ENCODE measurements at regions of chr1 and their contacts with region 1.

Region 1: GRCh38 chr1:84442256-84442655 is 36.8 kb upstream of the RPF1 start:
- DNase-seq: peak; percentile 80
- ATAC-seq: peak; percentile 94
- H3K4me3 ChIP-seq: no peak overlapping the region
- H3K4me3 Mint-ChIP-seq: no peak overlapping the region
- H3K27ac ChIP-seq: no peak overlapping the region
- H3K27ac Mint-ChIP-seq: no peak overlapping the region
- H3K4me1 ChIP-seq: peaks cover 18 to 23% of the 10 kb centered on the region in 2 donors
- H3K4me1 Mint-ChIP-seq: peaks cover 18% of the 10 kb centered on the region
- H3K27me3 ChIP-seq: peaks cover 0 to 4% (median 0%) of the 10 kb centered on the region in 4 experiments
- H3K27me3 Mint-ChIP-seq: peaks cover 8% of the 10 kb centered on the region
- CTCF ChIP-seq: peak; percentile 73

Region 2: DNA sequence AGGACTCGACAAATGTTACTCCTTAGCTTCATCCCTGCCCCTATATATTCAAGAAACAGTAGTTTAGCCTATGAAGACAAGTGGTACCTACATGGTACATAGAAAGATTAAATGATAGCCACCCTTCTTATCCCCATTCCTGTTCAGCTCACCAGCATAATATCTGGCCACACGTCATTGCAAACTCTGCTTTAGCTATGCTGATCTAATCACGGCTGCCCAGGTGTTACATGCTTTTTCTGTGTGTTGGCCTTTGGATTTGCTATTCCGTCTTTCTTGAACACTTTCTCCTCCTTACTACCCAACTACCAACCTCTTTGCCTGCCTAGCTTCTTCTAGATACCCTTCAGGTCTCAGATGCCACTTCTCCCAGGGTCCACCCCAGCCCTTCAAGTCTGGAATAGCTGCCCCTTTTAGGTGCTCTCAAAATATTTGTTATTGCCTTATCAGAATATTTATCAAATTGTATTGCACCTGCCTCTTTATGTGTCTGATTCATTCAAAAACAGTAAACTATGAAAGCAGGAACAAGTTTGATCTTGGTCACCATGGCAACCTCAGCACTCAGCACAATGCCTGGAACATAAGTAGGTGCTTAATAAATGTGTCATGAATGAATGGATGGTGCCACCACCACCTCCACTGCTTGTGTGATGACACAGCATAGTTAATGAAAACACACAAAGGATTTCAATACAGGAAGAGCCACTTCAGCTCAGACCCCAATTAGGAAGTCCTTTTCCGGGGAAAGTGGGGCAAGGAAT is 55.4 kb before region 1 on chr1:
- CTCF ChIA-PET with region 1: no interaction called
- POLR2A ChIA-PET with region 1: no interaction called
- intact Hi-C with region 1: no loop called
- DNase-seq: no peak
- ATAC-seq: no peak
- H3K4me3 ChIP-seq: no peak overlapping the region
- H3K4me3 Mint-ChIP-seq: no peak overlapping the region
- H3K27ac ChIP-seq: no peak overlapping the region
- H3K27ac Mint-ChIP-seq: no peak overlapping the region
- H3K4me1 ChIP-seq: no peaks in the 10 kb centered on the region
- H3K4me1 Mint-ChIP-seq: peaks cover 2% of the 10 kb centered on the region
- H3K27me3 ChIP-seq: no peaks in the 10 kb centered on the region
- H3K27me3 Mint-ChIP-seq: no peaks in the 10 kb centered on the region
- CTCF ChIP-seq: no peak

Region 3: GRCh38 chr1:84478876-84479868 is 36.9 kb after region 1 on chr1 and contains the start of gene RPF1:
- CTCF ChIA-PET with region 1: interaction called, 3 read pairs
- POLR2A ChIA-PET with region 1: no interaction called
- intact Hi-C with region 1: loop called (anchors 2 kb)
- DNase-seq: peak; percentile 88
- ATAC-seq: peak; percentile 95
- H3K4me3 ChIP-seq: peak within 1 kb of the TSS; percentile 66 to 90 (median 88)
- H3K4me3 Mint-ChIP-seq: peak within 1 kb of the TSS; percentile 94
- H3K27ac ChIP-seq: peak within 1 kb of the TSS; percentile 78 to 81
- H3K27ac Mint-ChIP-seq: peak within 1 kb of the TSS; percentile 91
- H3K4me1 ChIP-seq: peaks cover 19 to 32% of the 10 kb centered on the region in 2 donors
- H3K4me1 Mint-ChIP-seq: peaks cover 40% of the 10 kb centered on the region
- H3K27me3 ChIP-seq: peaks cover 0 to 24% (median 14%) of the 10 kb centered on the region in 4 experiments
- H3K27me3 Mint-ChIP-seq: peaks cover 30% of the 10 kb centered on the region
- CTCF ChIP-seq: no peak
- total RNA-seq, gene RPF1: 38.8 and 40.2 TPM in 2 replicates

Region 4: DNA sequence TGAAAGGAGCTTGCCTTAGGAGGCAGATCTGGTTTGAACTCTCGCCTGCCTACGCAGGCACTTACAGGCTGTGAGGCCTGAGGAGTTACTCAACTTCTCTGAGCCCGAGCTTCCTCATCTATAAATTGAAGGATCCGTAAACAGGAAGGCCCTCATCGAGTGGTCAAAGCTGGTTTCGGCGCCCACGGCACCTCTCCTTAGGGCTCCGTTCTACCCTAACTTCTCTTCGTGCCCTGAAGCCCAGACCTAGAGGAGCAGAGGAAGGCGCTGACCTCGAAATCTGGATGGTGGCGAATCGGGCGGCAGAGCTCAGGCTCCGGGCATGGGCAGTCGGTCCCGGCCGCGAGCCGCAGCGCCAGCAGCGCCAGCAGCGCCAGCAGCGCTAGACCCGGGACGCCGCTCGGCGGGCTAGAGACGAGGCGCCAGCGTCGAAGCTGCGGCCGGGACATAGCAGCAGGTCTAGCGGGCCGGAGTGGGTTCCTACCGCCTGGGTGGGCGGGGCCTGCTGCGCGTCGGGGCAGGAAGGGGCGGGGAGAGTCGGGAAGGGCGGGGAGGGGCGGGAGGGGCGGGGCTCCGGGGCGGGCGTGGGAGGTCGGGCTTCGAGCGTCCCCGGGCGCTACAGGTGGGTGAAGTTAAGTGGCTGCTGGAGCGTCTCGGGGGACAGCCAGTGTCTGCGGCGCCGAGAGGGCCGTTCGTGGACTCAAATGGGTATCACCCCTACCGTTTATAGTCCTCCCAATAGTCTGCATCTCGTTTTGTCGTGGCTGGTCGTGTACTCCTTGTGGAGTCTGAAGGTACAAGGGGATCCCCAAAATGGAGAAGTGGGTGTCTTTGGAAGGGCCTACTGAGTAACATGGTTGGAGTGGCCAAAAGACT is 131.9 kb after region 1 on chr1 and contains the start of gene CTBS:
- CTCF ChIA-PET with region 1: interaction called, 3 read pairs
- POLR2A ChIA-PET with region 1: interaction called, 7 read pairs
- intact Hi-C with region 1: loop called (anchors 2 kb)
- DNase-seq: peak; percentile 93
- ATAC-seq: peak; percentile 95
- H3K4me3 ChIP-seq: peak within 1 kb of the TSS; percentile 59 to 94 (median 73)
- H3K4me3 Mint-ChIP-seq: peak within 1 kb of the TSS; percentile 100
- H3K27ac ChIP-seq: peak within 1 kb of the TSS; percentile 96 to 99
- H3K27ac Mint-ChIP-seq: peak within 1 kb of the TSS; percentile 100
- H3K4me1 ChIP-seq: peaks cover 26% of the 10 kb centered on the region in 2 donors
- H3K4me1 Mint-ChIP-seq: peaks cover 43% of the 10 kb centered on the region
- H3K27me3 ChIP-seq: no peaks in the 10 kb centered on the region
- H3K27me3 Mint-ChIP-seq: no peaks in the 10 kb centered on the region
- CTCF ChIP-seq: no peak
- total RNA-seq, gene CTBS: 19.1 and 19.9 TPM in 2 replicates

Region 5: DNA sequence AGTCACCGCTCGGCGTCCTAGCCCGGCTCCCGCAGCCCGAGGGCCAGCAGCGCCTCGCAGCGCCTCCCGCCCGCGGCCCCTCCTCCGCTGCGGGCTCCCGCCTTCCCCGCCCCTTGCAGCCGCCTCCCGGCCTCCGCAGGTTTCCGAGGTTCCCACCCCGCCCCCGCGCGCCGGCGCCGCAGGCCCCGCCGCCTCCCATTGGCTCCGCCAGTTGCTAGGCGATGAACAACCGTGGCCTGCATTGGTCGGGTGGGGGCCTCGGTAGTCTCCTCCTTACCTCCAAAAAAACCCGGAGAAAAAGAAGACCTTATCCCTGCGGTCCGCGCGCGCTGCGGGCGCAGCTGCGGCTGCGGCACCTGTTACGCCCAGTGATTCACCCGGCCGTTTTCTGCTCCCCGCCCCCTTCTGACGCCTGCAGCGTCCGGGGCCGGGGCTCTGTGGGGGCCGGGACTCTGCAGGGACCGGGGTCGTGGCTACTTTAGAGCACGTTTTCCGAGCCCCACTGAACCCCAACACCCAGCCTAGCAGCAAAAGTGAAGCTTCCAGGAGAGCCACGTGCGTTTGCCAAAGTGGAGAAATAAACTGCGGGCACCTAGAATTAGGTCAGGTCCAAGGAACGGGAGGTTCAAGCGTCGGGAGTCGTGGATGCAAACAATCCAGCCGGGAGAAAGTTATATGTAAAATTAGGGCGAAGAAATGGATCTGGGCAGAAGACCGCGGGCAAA is 248.3 kb after region 1 on chr1 and contains the start of gene SSX2IP:
- CTCF ChIA-PET with region 1: interaction called, 3 read pairs
- POLR2A ChIA-PET with region 1: no interaction called
- intact Hi-C with region 1: loop called (anchors 1 kb)
- DNase-seq: peak; percentile 97
- ATAC-seq: peak; percentile 86
- H3K4me3 ChIP-seq: peak within 1 kb of the TSS; percentile 71 to 93 (median 85)
- H3K4me3 Mint-ChIP-seq: peak within 1 kb of the TSS; percentile 80
- H3K27ac ChIP-seq: peak within 1 kb of the TSS; percentile 56 to 64
- H3K27ac Mint-ChIP-seq: peak within 1 kb of the TSS; percentile 62
- H3K4me1 ChIP-seq: peaks cover 12 to 24% of the 10 kb centered on the region in 2 donors
- H3K4me1 Mint-ChIP-seq: peaks cover 27% of the 10 kb centered on the region
- H3K27me3 ChIP-seq: no peaks in the 10 kb centered on the region
- H3K27me3 Mint-ChIP-seq: no peaks in the 10 kb centered on the region
- CTCF ChIP-seq: no peak
- total RNA-seq, gene SSX2IP: 7.1 and 10.3 TPM in 2 replicates

Region 6: GRCh38 chr1:84753516-84754385 is 311.5 kb after region 1 on chr1:
- CTCF ChIA-PET with region 1: interaction called, 25 read pairs
- POLR2A ChIA-PET with region 1: no interaction called
- intact Hi-C with region 1: loop called (anchors 1 kb)
- DNase-seq: peak; percentile 76
- ATAC-seq: peak; percentile 81
- H3K4me3 ChIP-seq: no peak overlapping the region
- H3K4me3 Mint-ChIP-seq: no peak overlapping the region
- H3K27ac ChIP-seq: no peak overlapping the region
- H3K27ac Mint-ChIP-seq: no peak overlapping the region
- H3K4me1 ChIP-seq: peaks cover 1 to 3% of the 10 kb centered on the region in 2 donors
- H3K4me1 Mint-ChIP-seq: peaks cover 3% of the 10 kb centered on the region
- H3K27me3 ChIP-seq: peaks cover 0 to 16% (median 5%) of the 10 kb centered on the region in 4 experiments
- H3K27me3 Mint-ChIP-seq: peaks cover 30% of the 10 kb centered on the region
- CTCF ChIP-seq: peak; percentile 95

Region 7: DNA sequence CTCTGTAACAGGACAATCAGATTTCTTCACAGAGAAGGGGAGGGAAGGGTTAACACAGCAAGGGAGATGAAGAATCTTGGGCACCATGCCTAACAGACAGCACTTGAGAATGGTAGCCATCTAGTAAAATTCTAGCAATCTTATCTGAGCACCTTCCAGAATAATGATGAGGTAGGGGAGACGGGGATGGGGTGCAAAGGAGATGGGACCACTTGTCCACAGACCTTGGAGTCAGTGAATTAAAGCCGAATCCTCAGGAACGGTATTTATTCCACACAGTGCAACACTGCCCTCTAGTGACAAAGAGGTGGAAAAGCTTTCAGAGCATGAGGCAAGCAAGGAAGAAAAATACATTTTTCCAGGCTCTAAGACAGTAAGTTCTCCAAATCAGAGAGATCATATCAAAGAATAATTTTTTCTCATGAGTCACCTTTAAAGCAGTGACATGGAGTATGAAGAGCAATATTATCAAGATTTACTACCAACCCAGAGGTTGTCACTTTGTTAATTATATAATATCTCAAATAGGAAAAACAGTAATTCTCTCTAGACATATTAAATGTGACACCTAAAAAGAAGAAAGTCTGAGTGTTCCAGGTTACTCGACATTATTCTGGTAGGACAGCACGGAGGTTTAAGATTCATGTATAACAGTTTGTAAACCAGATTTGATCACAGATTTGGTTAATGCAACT is 494.0 kb after region 1 on chr1:
- CTCF ChIA-PET with region 1: interaction called, 9 read pairs
- POLR2A ChIA-PET with region 1: no interaction called
- intact Hi-C with region 1: loop called (anchors 1 kb)
- DNase-seq: peak; percentile 68
- ATAC-seq: peak; percentile 62
- H3K4me3 ChIP-seq: no peak overlapping the region
- H3K4me3 Mint-ChIP-seq: no peak overlapping the region
- H3K27ac ChIP-seq: no peak overlapping the region
- H3K27ac Mint-ChIP-seq: no peak overlapping the region
- H3K4me1 ChIP-seq: peaks cover 0 to 3% of the 10 kb centered on the region in 2 donors
- H3K4me1 Mint-ChIP-seq: peaks cover 2% of the 10 kb centered on the region
- H3K27me3 ChIP-seq: no peaks in the 10 kb centered on the region
- H3K27me3 Mint-ChIP-seq: no peaks in the 10 kb centered on the region
- CTCF ChIP-seq: peak; percentile 98